WTC11 (cell line): ENCODE measurements at regions of chr1 and their contacts with region 1.

Region 1: DNA sequence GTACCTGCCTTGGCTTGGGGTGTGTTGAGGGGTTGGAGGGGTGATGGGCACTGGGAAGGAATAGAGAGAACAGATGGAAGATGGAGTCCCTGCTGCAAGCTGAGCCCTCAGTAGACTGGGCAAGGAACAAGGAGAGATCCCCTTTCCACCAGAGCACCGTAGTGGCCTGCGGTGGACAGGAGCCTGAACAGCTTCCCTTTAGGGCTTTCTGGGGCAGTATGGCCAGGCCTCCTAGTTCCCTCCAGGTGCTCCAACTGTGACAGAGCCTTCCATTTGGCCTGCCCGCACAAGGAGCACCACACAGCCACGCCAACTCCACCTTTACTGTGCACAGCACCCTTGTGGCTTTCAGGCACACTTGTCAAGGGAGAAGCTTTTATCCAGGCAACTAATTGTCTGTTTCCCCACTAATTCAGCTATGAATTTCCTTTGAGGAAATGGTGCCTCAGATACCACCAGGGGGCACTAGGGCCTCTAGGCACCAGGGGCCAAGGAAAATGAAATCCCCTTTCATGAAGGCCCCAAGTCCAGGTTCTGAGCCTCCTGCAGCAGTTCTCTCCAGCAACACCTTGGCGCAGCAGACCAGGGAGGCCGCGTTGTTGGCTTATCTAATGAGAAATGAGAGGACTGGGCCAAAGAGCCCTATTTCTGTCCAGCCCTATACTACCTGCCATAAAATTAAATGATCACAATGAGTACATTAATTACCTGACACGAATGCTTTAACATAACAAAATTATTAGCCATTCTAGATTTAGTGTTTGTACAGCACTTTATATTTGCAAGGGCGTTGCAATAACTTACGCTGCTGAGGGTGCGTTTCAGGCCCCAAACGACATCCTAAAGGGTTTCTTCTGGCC is 23.1 kb upstream of the ERI3 start:
- DNase-seq: peak; percentile 76
- ATAC-seq: peak; percentile 85
- H3K4me3 Mint-ChIP-seq: no peak overlapping the region
- H3K27ac Mint-ChIP-seq: no peak overlapping the region
- H3K4me1 Mint-ChIP-seq: peaks cover 15% of the 10 kb centered on the region
- H3K27me3 Mint-ChIP-seq: peaks cover 4% of the 10 kb centered on the region
- CTCF ChIP-seq: peak; percentile 63

Region 2: GRCh38 chr1:44267438-44267837 is 110.7 kb before region 1 on chr1:
- CTCF ChIA-PET with region 1: no interaction called
- POLR2A ChIA-PET with region 1: no interaction called
- DNase-seq: no peak
- ATAC-seq: peak; percentile 51; the same call in 1 of the 2 replicates
- H3K4me3 Mint-ChIP-seq: no peak overlapping the region
- H3K27ac Mint-ChIP-seq: no peak overlapping the region
- H3K4me1 Mint-ChIP-seq: peaks cover 22% of the 10 kb centered on the region
- H3K27me3 Mint-ChIP-seq: no peaks in the 10 kb centered on the region
- CTCF ChIP-seq: no peak

Region 3: GRCh38 chr1:44305962-44306422 is 72.2 kb before region 1 on chr1:
- CTCF ChIA-PET with region 1: no interaction called
- POLR2A ChIA-PET with region 1: no interaction called
- DNase-seq: no peak
- ATAC-seq: no peak
- H3K4me3 Mint-ChIP-seq: no peak overlapping the region
- H3K27ac Mint-ChIP-seq: no peak overlapping the region
- H3K4me1 Mint-ChIP-seq: 0 out of 2 replicates have a peak, but pooled peaks cover 4% of the 10 kb centered on the region
- H3K27me3 Mint-ChIP-seq: no peaks in the 10 kb centered on the region
- CTCF ChIP-seq: no peak

Region 4: GRCh38 chr1:44327679-44328491 is 50.3 kb before region 1 on chr1:
- CTCF ChIA-PET with region 1: interaction called, 12 read pairs
- POLR2A ChIA-PET with region 1: no interaction called
- DNase-seq: peak; percentile 31
- ATAC-seq: peak; percentile 86
- H3K4me3 Mint-ChIP-seq: no peak overlapping the region
- H3K27ac Mint-ChIP-seq: no peak overlapping the region; the same call in 1 of the 2 replicates
- H3K4me1 Mint-ChIP-seq: peaks cover 32% of the 10 kb centered on the region
- H3K27me3 Mint-ChIP-seq: no peaks in the 10 kb centered on the region
- CTCF ChIP-seq: no peak

Region 5: GRCh38 chr1:44390277-44390676 is 12.1 kb after region 1 on chr1:
- CTCF ChIA-PET with region 1: interaction called, 15 read pairs
- POLR2A ChIA-PET with region 1: no interaction called
- DNase-seq: no peak
- ATAC-seq: no peak
- H3K4me3 Mint-ChIP-seq: no peak overlapping the region
- H3K27ac Mint-ChIP-seq: no peak overlapping the region
- H3K4me1 Mint-ChIP-seq: peaks cover 3% of the 10 kb centered on the region; the same call in 1 of the 2 replicates
- H3K27me3 Mint-ChIP-seq: no peaks in the 10 kb centered on the region; the same call in 1 of the 2 replicates
- CTCF ChIP-seq: no peak

Region 6: DNA sequence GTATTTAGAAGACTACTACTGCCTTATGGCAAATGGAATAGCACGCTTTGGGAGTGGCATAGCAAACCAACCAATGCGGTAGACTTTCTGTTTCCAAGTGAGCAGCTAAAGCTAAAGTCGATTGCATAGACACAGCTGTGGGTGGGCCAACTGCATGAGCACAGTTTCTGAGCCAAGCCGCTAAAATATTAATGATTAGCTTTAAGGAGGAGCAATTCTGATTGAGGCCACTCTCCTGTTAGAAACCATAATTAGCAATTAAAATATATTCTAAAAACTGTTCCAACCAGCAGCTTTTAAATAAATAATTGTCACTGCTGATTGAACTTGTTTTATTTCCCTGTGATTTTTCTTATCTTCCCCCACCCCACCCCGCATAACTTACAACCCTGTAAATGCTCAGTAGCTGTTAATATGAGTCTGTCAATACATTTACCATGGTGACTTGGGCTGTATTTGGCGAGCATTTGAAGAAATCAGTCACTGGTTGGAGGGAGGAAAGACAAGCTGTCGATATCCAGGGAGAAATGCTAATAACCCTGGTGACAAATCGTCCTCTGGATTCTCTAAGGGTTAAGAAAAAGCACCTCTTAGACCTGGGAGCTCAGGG is 59.1 kb after region 1 on chr1:
- CTCF ChIA-PET with region 1: interaction called, 23 read pairs
- POLR2A ChIA-PET with region 1: no interaction called
- DNase-seq: no peak
- ATAC-seq: peak; percentile 63; the same call in 1 of the 2 replicates
- H3K4me3 Mint-ChIP-seq: no peak overlapping the region
- H3K27ac Mint-ChIP-seq: no peak overlapping the region
- H3K4me1 Mint-ChIP-seq: peaks cover 38% of the 10 kb centered on the region
- H3K27me3 Mint-ChIP-seq: no peaks in the 10 kb centered on the region
- CTCF ChIP-seq: no peak

Region 7: DNA sequence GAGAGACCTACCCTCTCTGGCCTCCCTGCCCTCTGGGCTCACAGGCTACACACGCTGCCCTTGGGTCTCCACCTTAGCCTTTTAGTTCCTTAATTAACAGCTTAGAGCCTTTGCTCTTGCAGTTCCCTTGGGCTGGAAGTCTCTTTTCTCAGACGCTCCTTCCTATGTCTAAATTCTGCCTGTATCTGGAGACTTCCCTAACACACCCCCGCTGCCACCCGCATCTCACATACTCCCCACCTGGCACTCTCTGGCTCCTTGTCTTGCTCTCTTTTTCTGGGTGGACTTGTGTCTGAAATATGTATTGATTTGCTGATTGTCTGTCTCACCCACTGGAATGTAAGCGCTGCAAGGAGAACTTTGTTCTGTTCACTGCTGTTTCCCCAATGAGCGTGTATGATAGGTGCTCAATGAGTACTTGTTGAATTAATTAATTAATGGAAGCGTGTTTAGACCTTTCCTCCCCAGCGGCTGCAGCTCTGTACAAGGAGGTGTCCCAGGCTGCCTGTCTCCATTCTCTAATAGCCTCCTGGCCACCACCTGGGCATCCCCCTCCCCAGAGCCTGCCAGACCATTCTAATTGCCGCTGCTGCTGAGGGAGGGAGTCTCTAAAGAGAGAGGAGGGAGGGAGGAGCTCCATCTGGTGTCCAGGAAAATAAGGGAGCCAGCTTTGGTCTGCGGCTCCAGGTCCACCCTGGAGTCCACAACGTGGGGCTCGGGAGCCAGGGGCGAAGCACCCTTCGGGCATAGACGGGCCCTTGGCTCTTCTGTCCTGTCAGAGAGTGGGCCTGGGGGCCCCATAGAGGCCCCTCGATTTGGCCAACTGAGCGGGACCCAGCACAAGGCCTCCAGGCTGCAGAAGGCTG is 122.3 kb after region 1 on chr1:
- CTCF ChIA-PET with region 1: interaction called, 40 read pairs
- POLR2A ChIA-PET with region 1: no interaction called
- DNase-seq: peak; percentile 62
- ATAC-seq: peak; percentile 72
- H3K4me3 Mint-ChIP-seq: no peak overlapping the region
- H3K27ac Mint-ChIP-seq: no peak overlapping the region
- H3K4me1 Mint-ChIP-seq: peaks cover 40% of the 10 kb centered on the region
- H3K27me3 Mint-ChIP-seq: peaks cover 3% of the 10 kb centered on the region
- CTCF ChIP-seq: 0 out of 2 replicates have a peak, but pooled peaks have one; percentile 12

Region 8: DNA sequence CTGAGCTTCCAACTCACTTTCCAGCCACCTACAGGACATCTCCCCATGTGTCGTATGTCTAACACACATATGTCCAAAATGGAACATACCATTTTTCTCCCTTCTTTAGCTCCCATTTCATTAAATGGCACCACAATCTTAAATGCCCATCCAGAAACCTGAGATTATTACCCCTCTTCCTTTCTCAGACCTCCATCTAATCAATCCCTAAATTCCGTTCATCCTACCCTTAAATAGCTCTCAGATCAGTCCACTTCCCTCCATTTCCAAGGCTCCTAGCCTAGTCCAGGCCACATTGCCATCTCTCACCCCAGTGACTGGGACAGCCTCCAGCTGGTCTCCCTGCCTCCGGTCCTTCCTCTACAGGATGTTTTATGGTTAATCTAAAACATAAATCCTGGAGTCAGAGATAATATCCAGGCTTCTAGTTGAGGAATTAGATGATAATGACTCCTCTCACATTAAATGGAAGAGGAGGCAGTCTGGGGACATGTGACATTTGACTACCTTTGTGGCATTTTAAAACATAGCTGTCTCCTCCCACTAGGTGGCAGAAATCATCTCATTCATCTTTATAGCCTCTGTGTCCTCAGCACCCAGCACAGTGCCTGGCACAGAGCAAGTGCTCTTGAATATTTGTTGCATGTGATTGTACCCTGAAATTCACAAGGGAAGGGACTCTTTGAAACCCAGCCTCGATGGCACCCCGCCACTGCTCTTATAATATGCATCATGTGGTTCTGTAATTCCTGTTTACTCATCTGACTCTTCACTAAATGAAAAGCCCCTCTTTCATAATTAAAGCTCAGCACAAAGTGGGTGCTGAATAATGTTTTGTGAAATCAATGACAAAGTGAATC is 193.8 kb after region 1 on chr1:
- CTCF ChIA-PET with region 1: interaction called, 17 read pairs
- POLR2A ChIA-PET with region 1: no interaction called
- DNase-seq: no peak
- ATAC-seq: peak; percentile 46
- H3K4me3 Mint-ChIP-seq: no peak overlapping the region
- H3K27ac Mint-ChIP-seq: no peak overlapping the region
- H3K4me1 Mint-ChIP-seq: peaks cover 22% of the 10 kb centered on the region
- H3K27me3 Mint-ChIP-seq: peaks cover 3% of the 10 kb centered on the region; the same call in 1 of the 2 replicates
- CTCF ChIP-seq: no peak; the same call in 1 of the 2 replicates

Region 9: GRCh38 chr1:44609412-44609767 is 231.2 kb after region 1 on chr1:
- CTCF ChIA-PET with region 1: interaction called, 40 read pairs
- POLR2A ChIA-PET with region 1: no interaction called
- DNase-seq: peak; percentile 88
- ATAC-seq: peak; percentile 88
- H3K4me3 Mint-ChIP-seq: no peak overlapping the region
- H3K27ac Mint-ChIP-seq: no peak overlapping the region
- H3K4me1 Mint-ChIP-seq: peaks cover 11% of the 10 kb centered on the region
- H3K27me3 Mint-ChIP-seq: no peaks in the 10 kb centered on the region
- CTCF ChIP-seq: peak; percentile 29; the same call in 1 of the 2 replicates